Common myeloid progenitor, CD34-positive (primary cell): ENCODE measurements at regions of chr12 and their contacts with region 1.

Region 1: DNA sequence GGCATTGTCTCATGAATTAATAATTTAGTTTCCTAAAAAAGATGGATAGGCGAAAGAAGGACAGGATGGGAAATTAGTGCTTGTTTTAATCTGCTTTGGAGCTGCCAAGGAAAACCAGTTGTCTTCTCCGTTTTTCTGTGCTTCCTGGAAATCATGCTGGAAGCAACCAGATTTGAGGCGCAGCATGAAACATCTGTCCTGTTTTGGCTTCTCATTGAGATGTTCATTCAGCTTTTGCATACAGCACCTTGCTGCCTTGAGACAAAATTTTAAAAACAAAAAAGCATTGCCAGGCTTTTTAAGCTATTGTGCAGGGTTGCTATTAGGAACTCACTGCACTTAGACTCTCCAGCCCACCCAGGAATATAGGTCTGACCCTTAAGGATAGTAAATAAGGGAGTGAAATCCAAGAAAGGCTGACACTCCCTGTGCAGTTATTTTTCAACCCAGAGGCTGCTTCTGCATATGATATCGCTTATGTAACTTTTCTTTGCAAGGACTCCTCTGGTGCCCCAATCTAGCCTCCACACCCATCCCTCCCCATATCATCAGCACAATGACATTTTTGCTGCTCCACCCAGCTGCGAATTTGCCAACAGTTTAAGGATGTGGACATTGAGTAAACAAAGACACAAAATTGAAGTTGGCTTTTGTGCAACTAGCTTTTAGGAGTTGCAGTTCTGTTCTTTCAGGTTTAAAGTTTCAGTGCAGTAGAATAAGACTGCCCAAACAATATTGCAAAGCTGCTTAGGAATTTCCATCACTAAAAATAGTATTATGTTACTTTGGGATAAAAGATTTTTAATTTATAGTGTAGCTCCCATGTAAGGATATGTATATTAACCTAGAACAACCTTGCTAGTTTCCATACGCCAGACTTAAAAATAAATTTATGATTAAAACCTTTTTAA is 47.0 kb upstream of the MDM1 start:
- DNase-seq: peak in 2 of 3 donors; percentile 49 to 71
- H3K4me3 ChIP-seq: peak overlapping the region in 2 of 7 experiments; percentile 9 to 19
- H3K27ac ChIP-seq: peak overlapping the region in 1 of 2 experiments; percentile 84
- H3K4me1 ChIP-seq: peaks cover 35 to 91% (median 84%) of the 10 kb centered on the region in 4 experiments
- H3K27me3 ChIP-seq: no peaks in the 10 kb centered on the region

Region 2: GRCh38 chr12:68358532-68359485 is 20.3 kb before region 1 on chr12:
- CTCF ChIA-PET with region 1: interaction called, 41 read pairs
- POLR2A ChIA-PET with region 1: interaction called, 30 read pairs
- DNase-seq: peak; percentile 83 to 90 (median 89)
- H3K4me3 ChIP-seq: no peak overlapping the region
- H3K27ac ChIP-seq: peak overlapping the region in 1 of 2 experiments; percentile 57
- H3K4me1 ChIP-seq: peaks cover 17 to 60% (median 45%) of the 10 kb centered on the region in 4 experiments
- H3K27me3 ChIP-seq: no peaks in the 10 kb centered on the region

Region 3: DNA sequence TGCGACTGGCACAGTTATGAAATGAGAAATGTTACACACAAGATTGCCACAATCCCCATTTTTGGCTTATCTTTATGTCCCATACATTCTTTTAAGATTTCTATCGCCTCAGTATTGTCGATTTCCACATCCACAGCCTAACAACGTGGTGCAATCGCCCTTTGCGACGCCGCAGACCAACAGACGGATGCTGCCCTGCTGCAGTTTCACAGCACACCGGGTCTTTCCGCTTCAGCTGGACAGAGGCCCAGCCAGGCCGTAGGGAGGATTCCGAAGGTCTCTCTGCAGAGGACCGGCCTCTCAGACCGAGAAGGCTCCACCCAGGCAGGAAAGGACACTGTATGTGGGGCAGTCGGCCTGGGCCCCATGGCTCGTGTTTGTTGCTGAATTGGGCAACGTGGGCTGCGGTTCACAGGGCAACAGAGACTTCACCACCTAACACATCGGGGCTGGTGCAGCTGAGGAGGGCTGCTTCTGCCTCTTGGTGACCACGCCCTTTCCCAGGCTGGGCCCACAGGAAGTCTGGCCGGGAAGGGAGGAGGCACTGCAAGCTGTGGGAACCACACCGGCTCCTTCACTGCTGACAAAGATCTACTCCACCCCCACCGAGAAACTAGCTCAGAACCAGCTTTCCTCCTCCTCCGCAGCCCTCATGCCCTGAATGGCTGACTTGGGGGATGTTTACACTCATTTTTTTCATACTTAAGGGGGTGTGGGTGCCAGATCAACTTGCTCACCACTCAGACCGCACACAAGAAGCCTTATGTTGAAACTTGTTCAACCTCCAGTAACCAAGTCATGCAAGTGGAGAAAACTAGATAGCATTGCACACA is 14.0 kb before region 1 on chr12:
- CTCF ChIA-PET with region 1: interaction called, 41 read pairs
- POLR2A ChIA-PET with region 1: interaction called, 30 read pairs
- DNase-seq: peak; percentile 99 to 100 (median 100)
- H3K4me3 ChIP-seq: peak overlapping the region in 6 of 7 experiments; percentile 9 to 70 (median 46)
- H3K27ac ChIP-seq: peak overlapping the region; percentile 89 to 91
- H3K4me1 ChIP-seq: peaks cover 36 to 94% (median 72%) of the 10 kb centered on the region in 4 experiments
- H3K27me3 ChIP-seq: no peaks in the 10 kb centered on the region

Region 4: DNA sequence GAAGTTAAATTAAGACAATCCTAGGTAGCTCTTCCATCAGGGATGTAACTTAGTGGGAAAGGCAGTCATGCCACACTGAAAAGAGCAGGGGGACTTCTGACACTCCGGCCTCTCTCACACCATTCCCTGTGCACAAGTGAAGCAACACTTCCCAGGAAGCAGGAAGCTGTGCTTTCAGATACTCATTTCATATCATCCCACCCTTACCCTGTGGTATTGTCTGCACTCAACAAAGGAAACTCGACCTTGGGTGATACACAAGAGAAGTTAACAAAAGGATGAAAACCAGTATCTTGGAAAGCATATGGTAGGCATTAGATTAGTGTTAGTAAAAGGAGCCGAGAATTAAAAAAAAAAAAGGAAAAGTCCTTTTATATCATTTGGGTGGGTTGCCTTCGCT is 14.3 kb after region 1 on chr12:
- CTCF ChIA-PET with region 1: interaction called, 23 read pairs
- POLR2A ChIA-PET with region 1: interaction called, 10 read pairs
- DNase-seq: peak; percentile 49 to 77 (median 57)
- H3K4me3 ChIP-seq: peak overlapping the region in 1 of 7 experiments; percentile 36
- H3K27ac ChIP-seq: peak overlapping the region in 1 of 2 experiments; percentile 20
- H3K4me1 ChIP-seq: peaks cover 2 to 31% (median 20%) of the 10 kb centered on the region in 4 experiments
- H3K27me3 ChIP-seq: no peaks in the 10 kb centered on the region

Region 5: DNA sequence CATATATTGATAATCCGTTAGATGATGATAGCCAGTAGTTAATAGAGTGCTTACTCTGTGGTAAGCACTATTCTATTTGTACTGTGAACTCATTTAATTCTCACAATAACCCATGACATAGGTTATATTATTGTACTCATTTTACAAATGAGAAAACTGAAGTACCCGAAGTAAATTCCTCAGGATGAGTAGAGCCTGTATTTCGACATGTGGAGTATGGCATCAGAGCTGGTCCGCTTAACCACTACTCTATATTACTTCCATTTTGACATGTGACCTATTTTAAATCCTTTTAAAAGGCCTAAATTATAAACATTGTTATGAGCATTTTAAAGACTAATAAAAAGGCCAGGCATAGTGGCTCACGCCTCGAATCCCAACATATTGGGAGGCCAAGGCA is 223.6 kb after region 1 on chr12:
- CTCF ChIA-PET with region 1: no interaction called
- POLR2A ChIA-PET with region 1: no interaction called
- DNase-seq: no peak
- H3K4me3 ChIP-seq: no peak overlapping the region
- H3K27ac ChIP-seq: no peak overlapping the region
- H3K4me1 ChIP-seq: peaks cover 6 to 36% (median 24%) of the 10 kb centered on the region in 4 experiments
- H3K27me3 ChIP-seq: no peaks in the 10 kb centered on the region